ENCODE measurements at regions of chr1 and their contacts with region 1.

Region 1: DNA sequence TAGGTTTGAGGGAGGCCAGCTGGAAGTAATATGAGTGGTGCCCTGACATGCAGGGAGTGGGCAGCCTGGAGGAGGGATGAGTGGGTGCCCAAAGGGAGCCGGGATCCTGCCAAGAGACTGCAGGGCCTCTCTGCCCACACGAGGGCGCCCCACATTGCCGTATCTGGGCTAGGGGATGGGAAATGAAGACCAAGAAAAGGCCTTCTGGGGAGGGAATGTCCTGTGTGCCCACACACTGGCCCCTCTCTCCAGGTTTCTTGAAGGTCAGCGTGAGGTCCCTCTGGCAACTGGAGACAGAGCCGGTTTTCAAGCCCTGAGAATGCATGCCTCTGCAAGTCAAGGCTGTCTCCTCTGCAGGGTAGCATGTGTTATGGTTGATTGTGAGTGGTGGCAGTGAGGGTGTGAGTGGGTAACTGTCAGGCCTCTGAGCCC is 94.1 kb upstream of the PPM1J start:
- DNase-seq: peak; percentile 69 to 83 (median 79)
- H3K4me3 ChIP-seq: no peak overlapping the region
- H3K27ac ChIP-seq: no peak overlapping the region
- H3K4me1 ChIP-seq: peaks cover 0 to 7% (median 1%) of the 10 kb centered on the region in 3 donors
- H3K27me3 ChIP-seq: no peaks in the 10 kb centered on the region
- CTCF ChIP-seq: peak; percentile 69

Region 2: GRCh38 chr1:112715264-112716053 is 93.8 kb before region 1 on chr1 and contains the start of gene PPM1J:
- intact Hi-C with region 1: loop called (anchors 5 kb)
- DNase-seq: peak; percentile 95 to 100 (median 97)
- H3K4me3 ChIP-seq: peak within 1 kb of the TSS; percentile 65 to 76 (median 67)
- H3K27ac ChIP-seq: peak within 1 kb of the TSS; percentile 20 to 37
- H3K4me1 ChIP-seq: peaks cover 0 to 22% (median 12%) of the 10 kb centered on the region in 3 donors
- H3K27me3 ChIP-seq: peaks cover 2% of the 10 kb centered on the region
- CTCF ChIP-seq: no peak
- total RNA-seq, gene PPM1J: 2.0 TPM

Region 3: DNA sequence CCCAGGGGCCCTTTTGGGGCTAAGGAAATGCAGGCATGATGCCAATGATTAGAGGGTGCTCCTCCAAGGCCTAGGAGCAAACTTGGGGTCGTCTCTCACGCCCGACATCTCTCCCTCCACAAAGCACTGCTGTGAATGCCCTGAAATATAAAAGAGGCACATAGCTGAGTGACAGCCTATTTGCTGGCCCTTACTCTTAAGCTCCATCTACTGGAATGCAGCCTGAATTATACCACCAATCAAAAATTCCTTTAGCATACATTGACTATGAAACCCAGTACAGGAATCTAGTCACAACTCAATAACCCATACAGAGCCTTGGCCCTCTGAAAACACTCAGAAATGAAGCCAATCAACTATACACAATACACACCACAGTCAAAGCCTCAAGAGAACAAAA is 369.3 kb after region 1 on chr1:
- intact Hi-C with region 1: no loop called
- DNase-seq: no peak
- H3K4me3 ChIP-seq: no peak overlapping the region
- H3K27ac ChIP-seq: no peak overlapping the region
- H3K4me1 ChIP-seq: no peaks in the 10 kb centered on the region
- H3K27me3 ChIP-seq: no peaks in the 10 kb centered on the region
- CTCF ChIP-seq: peak; percentile 35

Measured in kidney (tissue), 22 donors.